Endothelial cell of umbilical vein (primary cell): ENCODE measurements at regions of chr4 and their contacts with region 1.

Region 1: DNA sequence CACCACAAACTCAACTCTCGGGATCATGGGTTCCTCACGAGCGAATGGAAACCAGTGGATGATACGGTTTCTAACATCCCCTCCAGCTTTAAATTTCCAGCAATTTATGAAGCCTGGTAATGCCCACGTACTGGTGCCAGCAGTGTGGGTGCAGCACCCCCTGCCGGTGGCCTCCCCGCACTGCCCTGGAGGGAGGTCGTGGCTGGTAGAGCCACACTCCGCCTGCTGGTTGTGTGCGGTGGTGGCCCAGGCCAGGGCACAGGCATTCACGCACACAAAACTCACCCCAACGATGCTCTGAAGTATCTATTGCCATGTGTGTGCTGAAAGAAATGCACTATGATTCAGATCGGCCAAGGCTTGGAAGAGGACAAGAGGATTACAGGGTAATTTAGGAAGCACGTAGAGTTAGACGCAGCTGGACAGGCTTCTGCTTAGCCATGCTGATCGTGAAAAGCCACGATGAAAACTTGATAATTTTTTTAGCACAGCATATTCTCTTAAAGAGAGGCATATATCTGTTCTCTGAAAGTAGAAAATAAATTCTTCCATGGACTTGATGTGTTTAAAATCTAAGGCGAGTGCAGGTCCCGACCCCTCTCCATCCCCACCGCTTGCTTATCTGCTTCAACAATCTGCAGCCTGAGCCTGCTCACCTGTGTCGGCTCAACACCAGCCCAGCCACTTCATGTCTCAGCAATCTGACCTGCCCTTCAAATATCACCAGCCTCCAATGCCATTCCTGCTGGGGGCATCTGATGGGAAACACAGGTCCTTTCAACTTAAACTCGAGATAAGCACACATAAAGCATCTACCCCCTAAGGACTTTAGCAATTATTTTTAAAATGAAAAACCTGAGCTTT is 59.0 kb downstream of the SCD5 start:
- DNase-seq: peak; percentile 82
- H3K4me3 ChIP-seq: no peak overlapping the region
- H3K27ac ChIP-seq: no peak overlapping the region
- H3K4me1 ChIP-seq: no peaks in the 10 kb centered on the region
- H3K27me3 ChIP-seq: no peaks in the 10 kb centered on the region
- CTCF ChIP-seq: peak; percentile 99 to 100
- POLR2A ChIP-seq: no peak

Region 2: DNA sequence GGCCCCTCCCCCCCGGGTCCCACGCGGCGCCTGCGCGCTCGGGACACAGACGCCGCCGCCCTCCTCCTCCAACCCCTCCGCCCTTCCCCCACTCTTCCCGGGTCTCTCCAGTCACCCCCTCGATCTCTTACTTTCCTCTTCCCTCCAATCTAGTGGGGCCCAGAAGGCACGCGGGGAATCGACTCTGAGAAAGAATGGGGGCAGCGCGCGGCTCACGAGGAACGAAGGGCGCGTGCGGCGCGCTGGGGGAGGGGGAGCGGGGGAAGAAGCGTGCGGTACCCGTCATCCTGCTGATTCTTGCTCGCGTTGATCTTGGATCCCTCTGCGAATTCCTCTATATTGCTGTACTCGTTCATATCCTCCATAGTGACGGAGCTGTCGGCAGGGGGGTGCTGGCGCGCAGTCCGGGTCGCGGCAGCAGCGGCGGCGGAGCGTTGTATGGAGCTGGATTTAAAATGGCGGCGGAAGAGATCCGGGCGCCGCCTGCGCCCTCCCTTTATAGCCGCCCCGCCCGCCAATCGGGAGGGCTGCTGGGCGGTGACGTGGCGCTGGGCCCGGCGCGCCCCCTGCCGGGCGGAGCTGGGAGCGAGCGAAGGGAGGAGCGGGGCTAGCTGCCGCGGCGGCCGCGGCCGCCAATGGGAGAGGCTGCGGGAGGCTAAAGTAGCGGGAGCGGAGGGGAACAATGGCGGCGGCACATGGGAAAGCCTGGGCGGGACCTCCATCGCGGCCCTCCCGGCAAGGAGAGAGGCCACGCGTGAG is 310.4 kb before region 1 on chr4:
- CTCF ChIA-PET with region 1: interaction called, 12 read pairs
- POLR2A ChIA-PET with region 1: no interaction called
- dilution Hi-C with region 1: no loop called
- intact Hi-C with region 1: no loop called
- DNase-seq: peak; percentile 95
- H3K4me3 ChIP-seq: peak overlapping the region; percentile 89 to 100 (median 98)
- H3K27ac ChIP-seq: peak overlapping the region; percentile 99
- H3K4me1 ChIP-seq: peaks cover 31% of the 10 kb centered on the region
- H3K27me3 ChIP-seq: no peaks in the 10 kb centered on the region
- CTCF ChIP-seq: peak; percentile 80 to 99
- POLR2A ChIP-seq: peak; percentile 60

Region 3: DNA sequence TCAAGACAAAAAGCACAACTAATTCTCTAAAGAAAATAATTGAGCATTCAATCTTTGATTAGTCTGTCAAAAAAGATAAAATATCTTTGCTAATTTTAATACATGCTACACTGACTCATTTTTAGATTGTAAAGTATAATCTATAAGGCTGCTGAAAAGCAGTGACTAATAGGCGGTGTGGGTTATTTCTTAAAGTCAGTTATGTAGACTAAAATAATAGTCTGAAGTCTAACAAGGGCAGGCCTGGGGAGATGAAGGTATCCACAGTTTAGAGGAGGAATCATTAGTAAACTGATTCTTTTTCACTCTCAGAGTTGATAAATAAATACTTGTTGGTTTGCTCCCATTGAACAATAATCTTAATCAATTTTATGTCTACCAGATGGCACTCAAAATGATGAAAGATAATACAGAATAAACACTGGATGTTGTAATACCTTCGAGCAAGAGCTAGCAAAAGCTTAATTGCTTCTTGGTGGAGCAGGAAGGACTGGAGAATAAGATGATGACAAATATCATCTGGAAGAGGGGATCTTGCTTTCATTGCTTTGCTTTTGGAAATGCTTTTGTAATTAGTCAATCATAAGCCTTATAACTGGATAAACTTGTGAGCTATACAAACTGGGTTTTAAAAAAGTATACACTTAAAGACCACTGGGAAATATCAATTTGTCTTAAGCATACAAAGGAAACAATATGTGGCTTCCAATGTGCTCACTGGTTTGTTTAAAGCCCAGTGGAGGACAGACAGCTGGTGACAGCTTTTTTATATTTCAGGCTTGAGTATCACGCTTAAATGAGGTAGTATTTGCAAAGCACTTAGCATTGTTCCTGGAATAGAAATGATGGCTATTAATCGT is 239.2 kb before region 1 on chr4:
- CTCF ChIA-PET with region 1: interaction called, 15 read pairs
- POLR2A ChIA-PET with region 1: no interaction called
- dilution Hi-C with region 1: no loop called
- intact Hi-C with region 1: no loop called
- DNase-seq: no peak
- H3K4me3 ChIP-seq: no peak overlapping the region
- H3K27ac ChIP-seq: no peak overlapping the region
- H3K4me1 ChIP-seq: no peaks in the 10 kb centered on the region
- H3K27me3 ChIP-seq: no peaks in the 10 kb centered on the region
- CTCF ChIP-seq: no peak
- POLR2A ChIP-seq: no peak

Region 4: DNA sequence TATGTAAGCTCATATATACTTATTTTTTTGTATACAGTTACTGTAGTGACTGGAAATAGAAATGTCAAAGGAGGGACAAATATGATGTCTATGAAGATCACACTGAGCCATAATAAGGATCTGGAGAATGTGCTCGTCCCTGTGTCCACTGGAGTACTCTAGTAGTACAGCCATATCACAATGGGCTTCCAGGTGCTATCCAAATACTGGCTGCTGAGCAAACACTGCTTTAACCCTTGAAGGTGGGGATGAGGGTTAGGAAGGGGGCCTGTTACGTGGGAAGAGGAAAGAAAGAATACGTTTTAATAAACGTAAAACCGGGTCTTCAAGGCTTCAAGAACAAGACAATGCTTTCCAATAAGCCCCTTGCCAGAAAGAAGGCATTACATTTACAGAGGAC is 148.0 kb before region 1 on chr4:
- CTCF ChIA-PET with region 1: interaction called, 17 read pairs
- POLR2A ChIA-PET with region 1: no interaction called
- dilution Hi-C with region 1: no loop called
- intact Hi-C with region 1: no loop called
- DNase-seq: no peak
- H3K4me3 ChIP-seq: no peak overlapping the region
- H3K27ac ChIP-seq: no peak overlapping the region
- H3K4me1 ChIP-seq: no peaks in the 10 kb centered on the region
- H3K27me3 ChIP-seq: peaks cover 21 to 22% of the 10 kb centered on the region in 2 experiments
- CTCF ChIP-seq: no peak
- POLR2A ChIP-seq: no peak

Region 5: DNA sequence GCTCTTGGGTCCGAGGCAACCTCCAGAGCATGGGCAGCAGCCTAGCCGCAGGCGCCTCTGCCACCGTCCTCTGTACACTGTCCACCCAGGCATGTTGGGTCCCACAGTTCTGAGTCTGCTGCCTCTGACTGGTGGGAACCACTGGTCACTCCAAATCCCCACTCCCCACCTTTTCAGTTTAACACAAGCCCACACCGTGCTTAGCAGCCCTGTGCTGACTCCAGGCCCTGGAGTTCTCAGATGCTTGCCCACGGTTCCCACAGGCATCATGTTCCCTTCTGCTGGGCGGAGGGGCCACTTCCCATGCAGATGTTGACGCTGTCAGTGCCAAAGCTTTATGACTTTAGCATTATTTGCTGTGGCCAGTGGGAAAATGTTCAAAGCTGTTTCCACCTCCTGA is 45.5 kb before region 1 on chr4:
- CTCF ChIA-PET with region 1: interaction called, 15 read pairs
- POLR2A ChIA-PET with region 1: no interaction called
- dilution Hi-C with region 1: no loop called
- intact Hi-C with region 1: no loop called
- DNase-seq: peak; percentile 14
- H3K4me3 ChIP-seq: no peak overlapping the region
- H3K27ac ChIP-seq: no peak overlapping the region
- H3K4me1 ChIP-seq: peaks cover 9% of the 10 kb centered on the region
- H3K27me3 ChIP-seq: no peaks in the 10 kb centered on the region
- CTCF ChIP-seq: no peak
- POLR2A ChIP-seq: no peak

Region 6: DNA sequence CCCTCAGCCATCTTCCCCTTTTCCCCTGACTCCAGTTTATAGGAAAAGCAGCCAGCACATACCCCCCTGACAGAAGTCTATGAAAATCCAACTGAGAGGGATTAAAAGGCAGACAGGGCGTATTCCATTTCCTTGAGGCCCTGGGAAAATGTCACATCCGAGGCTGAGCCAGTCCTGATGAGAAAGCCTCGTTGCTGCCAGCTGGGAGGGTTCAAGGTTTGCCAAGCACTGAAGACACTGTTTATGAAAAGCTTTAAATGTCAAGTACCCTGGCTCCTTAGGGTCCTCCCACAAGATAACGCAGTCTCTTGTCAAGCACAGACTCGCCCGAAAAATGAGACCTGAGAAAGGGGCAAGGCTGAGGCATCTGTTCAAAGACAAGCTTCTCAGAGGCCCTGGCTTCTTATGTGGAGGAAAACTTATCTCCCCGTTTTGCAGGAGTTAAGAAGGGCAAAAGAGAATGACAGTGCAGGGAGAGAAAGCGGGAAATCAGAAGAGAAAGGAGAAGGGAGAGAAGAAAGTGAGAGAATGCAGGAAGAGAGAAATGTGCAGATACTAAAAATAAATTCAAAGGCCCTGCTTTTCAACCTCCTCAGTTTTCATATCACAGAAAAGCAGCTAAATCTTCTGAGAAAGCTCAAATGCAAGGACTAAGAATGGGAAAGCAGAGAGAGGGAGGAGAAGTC is 14.3 kb after region 1 on chr4:
- CTCF ChIA-PET with region 1: interaction called, 46 read pairs
- POLR2A ChIA-PET with region 1: no interaction called
- dilution Hi-C with region 1: no loop called
- intact Hi-C with region 1: no loop called
- DNase-seq: peak; percentile 26
- H3K4me3 ChIP-seq: no peak overlapping the region
- H3K27ac ChIP-seq: no peak overlapping the region
- H3K4me1 ChIP-seq: no peaks in the 10 kb centered on the region
- H3K27me3 ChIP-seq: no peaks in the 10 kb centered on the region
- CTCF ChIP-seq: no peak
- POLR2A ChIP-seq: no peak